Activated naive CD4-positive, alpha-beta T cell treated with anti-CD3 and anti-CD28 coated beads for 36 hours (primary cell): ENCODE measurements at regions of chr17 and their contacts with region 1.

Region 1: GRCh38 chr17:28992625-28993600 is 12.9 kb downstream of the SEZ6 start:
- DNase-seq: no peak
- H3K4me3 Mint-ChIP-seq: no peak overlapping the region
- H3K27ac Mint-ChIP-seq: no peak overlapping the region
- H3K4me1 Mint-ChIP-seq: no peaks in the 10 kb centered on the region
- H3K27me3 Mint-ChIP-seq: peaks cover 14% of the 10 kb centered on the region

Region 2: GRCh38 chr17:29007955-29008361 is 15.0 kb after region 1 on chr17:
- CTCF ChIA-PET with region 1: no interaction called
- intact Hi-C with region 1: loop called (anchors 2 kb)
- DNase-seq: no peak
- H3K4me3 Mint-ChIP-seq: no peak overlapping the region
- H3K27ac Mint-ChIP-seq: no peak overlapping the region
- H3K4me1 Mint-ChIP-seq: peaks cover 2% of the 10 kb centered on the region
- H3K27me3 Mint-ChIP-seq: peaks cover 42% of the 10 kb centered on the region

Region 3: DNA sequence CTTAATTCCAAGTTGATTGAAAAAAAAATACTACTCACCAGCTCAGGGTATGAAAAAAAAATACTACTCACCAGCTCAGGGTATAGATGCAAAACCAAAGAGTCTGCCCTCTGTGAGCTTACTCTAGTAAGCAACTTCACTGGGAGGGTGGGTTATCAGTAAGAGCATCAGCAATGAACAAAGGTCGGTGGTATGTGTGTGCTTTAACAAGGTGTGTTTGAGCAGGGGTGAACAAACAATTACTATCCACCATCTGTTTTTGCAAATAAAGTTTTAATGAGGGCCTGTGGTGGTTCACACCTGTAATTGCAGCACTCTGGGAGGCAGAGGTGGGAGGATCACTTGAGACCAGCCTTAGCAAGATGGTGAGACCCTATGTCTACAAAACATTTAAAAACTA is 281.0 kb after region 1 on chr17:
- CTCF ChIA-PET with region 1: no interaction called
- intact Hi-C with region 1: no loop called
- DNase-seq: no peak
- H3K4me3 Mint-ChIP-seq: no peak overlapping the region
- H3K27ac Mint-ChIP-seq: no peak overlapping the region
- H3K4me1 Mint-ChIP-seq: peaks cover 54% of the 10 kb centered on the region
- H3K27me3 Mint-ChIP-seq: no peaks in the 10 kb centered on the region